AG04450 (cell line): ENCODE measurements at regions of chr16 and their contacts with region 1.

Region 1: GRCh38 chr16:48623304-48624016 is 13.5 kb upstream of the N4BP1 start:
- DNase-seq: peak; percentile 71
- H3K4me3 ChIP-seq: peak overlapping the region; percentile 53
- H3K27ac ChIP-seq: peak overlapping the region; percentile 75
- H3K27me3 ChIP-seq: no peaks in the 10 kb centered on the region
- CTCF ChIP-seq: peak; percentile 99

Region 2: DNA sequence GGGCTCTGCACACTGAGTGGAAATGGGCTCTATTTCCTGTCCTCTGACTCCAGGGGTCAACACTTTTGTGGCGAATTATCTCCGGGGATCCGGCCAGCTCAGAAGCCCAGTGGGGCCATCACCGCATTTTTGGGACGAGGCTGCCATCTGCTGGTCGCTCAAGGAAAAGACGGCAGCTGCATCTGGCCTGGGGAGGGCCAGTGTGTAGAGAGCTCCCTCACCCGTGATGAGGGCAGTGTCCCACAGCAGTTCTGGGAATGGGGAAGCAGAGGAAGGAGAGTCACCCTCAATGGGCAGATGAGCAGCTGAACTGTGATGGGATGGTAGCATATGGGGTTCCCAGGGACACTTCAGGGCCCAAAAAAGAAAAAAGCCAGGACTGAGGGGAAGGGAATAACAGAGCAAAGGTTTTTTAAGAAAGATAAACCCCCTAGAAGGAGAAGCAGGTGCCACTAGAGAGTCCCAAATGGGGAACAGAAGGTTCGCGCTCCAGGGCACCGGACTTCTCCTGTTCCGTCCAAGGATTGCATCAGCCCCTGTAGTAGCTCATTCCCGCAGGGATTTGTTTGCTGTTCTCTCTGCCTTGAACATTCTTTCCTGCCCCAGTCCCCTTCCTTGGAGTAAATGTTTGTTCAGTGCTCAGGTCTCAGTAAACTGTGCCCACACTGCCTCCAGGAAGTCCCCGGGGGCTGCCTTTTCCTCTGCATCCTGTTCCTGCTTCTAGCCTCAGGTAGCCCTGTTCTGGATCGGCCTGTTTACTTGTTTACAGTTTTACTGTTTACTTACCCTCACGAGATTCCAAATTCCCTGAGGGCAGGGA is 458.3 kb before region 1 on chr16:
- CTCF ChIA-PET with region 1: interaction called, 30 read pairs
- POLR2A ChIA-PET with region 1: no interaction called
- DNase-seq: peak; percentile 13
- H3K4me3 ChIP-seq: no peak overlapping the region
- H3K27ac ChIP-seq: no peak overlapping the region
- H3K27me3 ChIP-seq: no peaks in the 10 kb centered on the region
- CTCF ChIP-seq: peak; percentile 85

Region 3: GRCh38 chr16:48271728-48272127 is 351.7 kb before region 1 on chr16:
- CTCF ChIA-PET with region 1: interaction called, 38 read pairs
- POLR2A ChIA-PET with region 1: no interaction called
- DNase-seq: no peak
- H3K4me3 ChIP-seq: no peak overlapping the region
- H3K27ac ChIP-seq: no peak overlapping the region
- H3K27me3 ChIP-seq: no peaks in the 10 kb centered on the region
- CTCF ChIP-seq: peak; percentile 51

Region 4: GRCh38 chr16:48323783-48324775 is 299.4 kb before region 1 on chr16:
- CTCF ChIA-PET with region 1: interaction called, 11 read pairs
- POLR2A ChIA-PET with region 1: no interaction called
- DNase-seq: no peak
- H3K4me3 ChIP-seq: no peak overlapping the region
- H3K27ac ChIP-seq: no peak overlapping the region
- H3K27me3 ChIP-seq: no peaks in the 10 kb centered on the region
- CTCF ChIP-seq: no peak

Region 5: GRCh38 chr16:48374255-48374654 is 249.2 kb before region 1 on chr16:
- CTCF ChIA-PET with region 1: interaction called, 13 read pairs
- POLR2A ChIA-PET with region 1: no interaction called
- DNase-seq: no peak
- H3K4me3 ChIP-seq: no peak overlapping the region
- H3K27ac ChIP-seq: no peak overlapping the region
- H3K27me3 ChIP-seq: no peaks in the 10 kb centered on the region
- CTCF ChIP-seq: no peak

Region 6: GRCh38 chr16:48542020-48542473 is 81.4 kb before region 1 on chr16:
- CTCF ChIA-PET with region 1: interaction called, 16 read pairs
- POLR2A ChIA-PET with region 1: no interaction called
- DNase-seq: no peak
- H3K4me3 ChIP-seq: no peak overlapping the region
- H3K27ac ChIP-seq: no peak overlapping the region
- H3K27me3 ChIP-seq: no peaks in the 10 kb centered on the region
- CTCF ChIP-seq: peak; percentile 66

Region 7: GRCh38 chr16:48574763-48575162 is 48.7 kb before region 1 on chr16:
- CTCF ChIA-PET with region 1: interaction called, 10 read pairs
- POLR2A ChIA-PET with region 1: no interaction called
- DNase-seq: no peak
- H3K4me3 ChIP-seq: no peak overlapping the region
- H3K27ac ChIP-seq: no peak overlapping the region
- H3K27me3 ChIP-seq: no peaks in the 10 kb centered on the region
- CTCF ChIP-seq: no peak

Region 8: DNA sequence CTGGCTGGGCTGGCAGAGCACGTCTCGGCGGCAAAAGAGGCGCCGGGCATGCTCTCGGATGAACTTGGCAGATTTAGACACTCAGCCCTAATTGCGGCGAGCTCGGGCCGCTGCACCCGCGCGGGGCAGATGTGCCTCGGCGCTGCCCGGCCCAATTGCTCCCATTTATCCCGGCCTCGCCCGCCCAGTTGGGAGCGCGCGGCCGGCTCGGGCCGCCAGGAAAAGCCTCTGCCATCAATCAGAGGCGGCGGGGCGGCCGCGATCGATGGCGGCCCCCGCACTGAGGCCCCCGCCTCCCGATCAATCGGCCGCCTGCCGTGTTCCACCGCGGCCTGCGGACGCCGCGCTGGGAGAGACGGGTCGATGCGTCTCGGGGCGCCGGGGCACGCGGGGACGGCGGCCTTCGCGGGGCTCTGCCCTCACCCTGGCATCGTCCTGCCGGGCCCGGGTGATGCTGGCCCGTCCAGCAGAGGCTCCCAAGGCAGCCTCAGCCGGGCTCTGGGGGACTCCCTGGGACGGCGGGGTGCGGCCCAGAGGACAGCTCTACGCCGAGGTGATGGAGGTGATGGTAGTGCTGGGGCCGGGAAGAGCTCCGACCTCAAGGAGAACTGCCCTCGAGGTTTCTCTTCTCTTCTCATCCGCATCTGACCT is 187.5 kb after region 1 on chr16:
- CTCF ChIA-PET with region 1: no interaction called
- POLR2A ChIA-PET with region 1: no interaction called
- DNase-seq: no peak
- H3K4me3 ChIP-seq: no peak overlapping the region
- H3K27ac ChIP-seq: no peak overlapping the region
- H3K27me3 ChIP-seq: peaks cover 5% of the 10 kb centered on the region
- CTCF ChIP-seq: no peak